Activated CD4-positive, alpha-beta memory T cell treated with anti-CD3 and anti-CD28 coated beads for 36 hours (primary cell): ENCODE measurements at regions of chr1 and their contacts with region 1.

Region 1: GRCh38 chr1:211698161-211699026 is 23.0 kb upstream of the NEK2 start:
- DNase-seq: peak; percentile 90
- H3K4me3 Mint-ChIP-seq: peak overlapping the region; percentile 22
- H3K27ac Mint-ChIP-seq: no peak overlapping the region
- H3K4me1 Mint-ChIP-seq: peaks cover 16% of the 10 kb centered on the region
- H3K27me3 Mint-ChIP-seq: no peaks in the 10 kb centered on the region

Region 2: DNA sequence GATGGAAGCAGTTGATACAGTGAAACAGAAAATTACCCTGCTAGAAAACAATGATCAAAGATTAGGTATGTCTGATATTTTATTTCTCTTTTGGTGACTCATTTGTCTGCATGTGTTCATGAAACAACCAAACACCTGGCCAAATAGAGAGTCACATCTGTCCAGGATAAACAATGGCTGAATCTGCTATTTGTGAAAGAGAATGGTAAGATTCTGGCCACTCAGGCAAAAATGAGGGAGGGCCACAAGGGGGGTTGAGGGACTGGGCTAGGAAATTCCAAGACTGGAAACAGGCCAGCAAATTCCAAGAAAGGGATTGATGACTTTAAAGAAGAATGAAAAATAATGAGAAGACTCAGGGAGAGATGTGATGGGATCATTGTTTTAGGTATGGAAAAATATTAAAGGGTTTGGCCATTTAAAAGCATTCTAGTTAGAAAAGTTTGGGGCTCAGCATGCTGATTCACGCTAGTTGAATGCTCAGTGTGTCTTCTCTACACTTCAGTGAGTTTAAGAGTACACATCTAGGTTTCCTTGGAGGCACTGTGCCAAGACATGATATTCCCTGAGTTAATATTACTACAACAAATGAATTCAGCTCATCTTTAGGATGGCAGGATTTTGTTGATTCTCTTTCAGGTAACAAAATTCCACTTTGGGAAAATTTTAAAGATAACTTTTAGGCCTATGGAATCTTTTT is 326.8 kb before region 1 on chr1:
- CTCF ChIA-PET with region 1: no interaction called
- POLR2A ChIA-PET with region 1: no interaction called
- intact Hi-C with region 1: no loop called
- DNase-seq: no peak
- H3K4me3 Mint-ChIP-seq: no peak overlapping the region
- H3K27ac Mint-ChIP-seq: no peak overlapping the region
- H3K4me1 Mint-ChIP-seq: peaks cover 20% of the 10 kb centered on the region
- H3K27me3 Mint-ChIP-seq: no peaks in the 10 kb centered on the region

Region 3: GRCh38 chr1:211386921-211387320 is 311.5 kb before region 1 on chr1:
- CTCF ChIA-PET with region 1: no interaction called
- POLR2A ChIA-PET with region 1: no interaction called
- intact Hi-C with region 1: no loop called
- DNase-seq: no peak
- H3K4me3 Mint-ChIP-seq: no peak overlapping the region
- H3K27ac Mint-ChIP-seq: no peak overlapping the region
- H3K4me1 Mint-ChIP-seq: peaks cover 11% of the 10 kb centered on the region
- H3K27me3 Mint-ChIP-seq: no peaks in the 10 kb centered on the region

Region 4: GRCh38 chr1:211680752-211681327 is 17.6 kb before region 1 on chr1:
- CTCF ChIA-PET with region 1: interaction called, 50 read pairs
- POLR2A ChIA-PET with region 1: no interaction called
- intact Hi-C with region 1: no loop called
- DNase-seq: peak; percentile 83
- H3K4me3 Mint-ChIP-seq: no peak overlapping the region
- H3K27ac Mint-ChIP-seq: peak overlapping the region; percentile 69
- H3K4me1 Mint-ChIP-seq: peaks cover 9% of the 10 kb centered on the region
- H3K27me3 Mint-ChIP-seq: no peaks in the 10 kb centered on the region

Region 5: GRCh38 chr1:211813590-211813989 is 115.2 kb after region 1 on chr1:
- CTCF ChIA-PET with region 1: interaction called, 14 read pairs
- POLR2A ChIA-PET with region 1: no interaction called
- intact Hi-C with region 1: no loop called
- DNase-seq: no peak
- H3K4me3 Mint-ChIP-seq: no peak overlapping the region
- H3K27ac Mint-ChIP-seq: no peak overlapping the region
- H3K4me1 Mint-ChIP-seq: peaks cover 2% of the 10 kb centered on the region
- H3K27me3 Mint-ChIP-seq: no peaks in the 10 kb centered on the region

Region 6: GRCh38 chr1:211885747-211886522 is 187.5 kb after region 1 on chr1:
- CTCF ChIA-PET with region 1: interaction called, 10 read pairs
- POLR2A ChIA-PET with region 1: no interaction called
- intact Hi-C with region 1: no loop called
- DNase-seq: no peak
- H3K4me3 Mint-ChIP-seq: no peak overlapping the region
- H3K27ac Mint-ChIP-seq: no peak overlapping the region
- H3K4me1 Mint-ChIP-seq: peaks cover 17% of the 10 kb centered on the region
- H3K27me3 Mint-ChIP-seq: peaks cover 19% of the 10 kb centered on the region

Region 7: GRCh38 chr1:212045981-212046380 is 347.6 kb after region 1 on chr1:
- CTCF ChIA-PET with region 1: no interaction called
- POLR2A ChIA-PET with region 1: no interaction called
- intact Hi-C with region 1: no loop called
- DNase-seq: no peak
- H3K4me3 Mint-ChIP-seq: no peak overlapping the region
- H3K27ac Mint-ChIP-seq: no peak overlapping the region
- H3K4me1 Mint-ChIP-seq: peaks cover 3% of the 10 kb centered on the region
- H3K27me3 Mint-ChIP-seq: no peaks in the 10 kb centered on the region